Calu3 (cell line): ENCODE measurements at regions of chr3 and their contacts with region 1.

Region 1: GRCh38 chr3:176919836-176920765 is 277.2 kb downstream of the TBL1XR1 start:
- DNase-seq: no peak
- H3K4me3 Mint-ChIP-seq: no peak overlapping the region
- H3K27ac Mint-ChIP-seq: no peak overlapping the region
- H3K4me1 Mint-ChIP-seq: peaks cover 27% of the 10 kb centered on the region
- H3K27me3 Mint-ChIP-seq: no peaks in the 10 kb centered on the region
- CTCF ChIP-seq: no peak

Region 2: DNA sequence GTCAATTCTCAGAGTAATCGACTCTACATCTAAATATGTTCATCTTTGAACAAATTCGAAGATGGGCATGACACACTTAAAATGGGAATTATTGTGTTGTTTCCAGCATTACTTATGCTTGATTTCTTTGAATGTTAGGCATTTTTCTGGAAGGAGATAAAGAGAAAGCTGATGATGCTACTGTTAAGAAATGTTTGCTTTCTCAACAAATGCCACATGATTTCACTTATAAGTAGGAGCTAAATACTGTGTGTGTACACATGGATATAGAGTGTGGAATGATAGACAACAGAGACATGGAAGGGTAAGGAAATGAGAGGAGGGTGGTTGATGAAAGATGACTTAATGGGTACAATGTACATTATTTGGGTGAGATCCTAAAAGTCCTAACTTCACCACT is 123.7 kb before region 1 on chr3:
- CTCF ChIA-PET with region 1: interaction called, 8 read pairs
- intact Hi-C with region 1: loop called (anchors 5 kb)
- DNase-seq: no peak
- H3K4me3 Mint-ChIP-seq: no peak overlapping the region
- H3K27ac Mint-ChIP-seq: no peak overlapping the region
- H3K4me1 Mint-ChIP-seq: peaks cover 28% of the 10 kb centered on the region
- H3K27me3 Mint-ChIP-seq: no peaks in the 10 kb centered on the region
- CTCF ChIP-seq: no peak

Region 3: GRCh38 chr3:177359593-177360357 is 439.7 kb after region 1 on chr3:
- CTCF ChIA-PET with region 1: no interaction called
- intact Hi-C with region 1: no loop called
- DNase-seq: peak; percentile 99
- H3K4me3 Mint-ChIP-seq: peak overlapping the region; percentile 63
- H3K27ac Mint-ChIP-seq: peak overlapping the region; percentile 71
- H3K4me1 Mint-ChIP-seq: peaks cover 60% of the 10 kb centered on the region
- H3K27me3 Mint-ChIP-seq: no peaks in the 10 kb centered on the region
- CTCF ChIP-seq: no peak